ENCODE measurements at regions of chr11 and their contacts with region 1.

Region 1: DNA sequence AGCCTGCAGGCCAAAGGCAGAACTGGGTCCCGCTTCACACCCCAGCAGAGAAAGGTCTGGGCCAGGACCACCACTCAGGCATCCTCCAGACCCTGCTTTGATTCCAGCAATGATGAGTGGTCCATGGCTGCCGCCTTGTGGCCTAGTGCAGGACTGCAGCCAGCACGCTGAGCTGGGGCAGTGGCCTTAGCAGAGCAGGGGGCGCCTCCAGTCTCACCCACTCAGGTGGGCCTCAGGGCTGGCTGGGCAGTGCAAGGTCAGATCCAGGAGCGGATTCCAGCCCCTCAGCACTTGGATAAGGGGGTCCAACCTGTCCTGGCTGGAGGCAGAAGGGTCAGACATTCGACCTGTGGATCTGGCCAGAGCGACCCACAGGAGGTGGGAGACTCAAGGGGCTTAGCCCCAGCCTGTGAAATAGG is 9.6 kb upstream of the PDE2A start:
- DNase-seq: no peak
- H3K4me3 ChIP-seq: no peak overlapping the region
- H3K27ac ChIP-seq: no peak overlapping the region
- H3K27me3 ChIP-seq: peaks cover 8% of the 10 kb centered on the region
- CTCF ChIP-seq: peak; percentile 91

Region 2: DNA sequence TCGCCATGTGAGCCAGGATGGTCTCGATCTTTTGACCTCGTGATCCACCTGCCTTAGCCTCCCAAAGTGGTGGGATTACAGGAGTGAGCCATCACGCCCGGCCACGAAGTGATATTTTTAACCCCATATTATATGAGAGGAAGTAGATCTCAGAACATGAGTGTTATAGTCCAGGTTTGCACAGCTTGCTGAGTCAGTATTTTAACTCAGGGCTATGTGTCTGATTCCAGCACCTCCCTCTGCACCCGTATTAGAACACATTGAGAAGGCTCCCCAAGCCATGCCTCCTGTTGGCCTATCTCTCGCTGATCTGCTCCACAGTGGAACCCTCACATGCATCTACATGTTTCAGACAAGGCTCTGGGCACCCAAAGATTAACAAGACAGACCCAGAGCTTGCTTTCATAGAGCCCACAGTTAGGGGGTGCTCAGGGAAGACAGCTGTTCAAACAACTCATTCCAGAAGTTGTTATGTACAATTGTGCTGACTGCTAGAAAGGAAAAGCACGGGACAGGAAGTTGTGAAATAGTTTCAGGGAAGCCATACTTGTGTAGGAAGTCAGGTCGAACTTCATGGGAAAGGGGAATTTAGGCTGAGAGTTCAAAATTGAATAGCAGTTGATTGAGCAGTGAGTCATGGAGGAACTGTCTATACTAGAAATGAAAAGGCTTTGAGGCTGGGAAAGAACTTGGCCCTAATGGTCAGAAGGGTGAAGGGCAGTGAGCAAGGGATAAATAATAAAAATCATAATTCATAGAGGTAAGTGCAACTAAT is 200.2 kb before region 1 on chr11:
- CTCF ChIA-PET with region 1: interaction called, 17 read pairs
- POLR2A ChIA-PET with region 1: no interaction called
- DNase-seq: no peak
- H3K4me3 ChIP-seq: no peak overlapping the region
- H3K27ac ChIP-seq: no peak overlapping the region
- H3K27me3 ChIP-seq: peaks cover 25% of the 10 kb centered on the region
- CTCF ChIP-seq: no peak

Region 3: DNA sequence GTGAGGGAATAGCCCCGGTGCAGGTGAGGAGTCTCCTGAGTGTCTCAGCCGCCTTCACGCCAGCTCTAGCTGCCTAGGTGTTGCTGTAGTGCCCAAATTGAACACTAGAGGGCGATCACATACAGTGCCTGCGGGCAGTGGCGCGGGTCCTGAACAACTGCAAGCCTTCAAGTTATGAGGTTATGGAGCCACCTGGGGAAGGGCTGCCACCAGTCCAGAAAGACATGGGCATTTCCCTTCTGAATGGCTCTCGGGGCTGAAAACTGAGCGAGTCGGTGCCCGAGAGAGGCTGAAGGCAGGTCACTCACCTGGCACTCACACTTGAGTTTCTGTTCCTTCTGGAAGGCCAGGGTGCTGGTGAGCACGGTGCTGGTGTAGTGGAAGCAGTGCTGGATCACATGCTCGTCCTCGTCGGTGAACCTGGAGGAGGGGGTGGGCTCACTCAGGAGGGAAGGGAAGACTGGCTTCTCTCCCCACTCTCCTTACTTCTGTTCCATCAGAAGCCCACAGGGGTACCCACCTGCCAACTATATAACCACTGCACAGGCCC is 98.0 kb before region 1 on chr11:
- CTCF ChIA-PET with region 1: interaction called, 18 read pairs
- POLR2A ChIA-PET with region 1: no interaction called
- DNase-seq: peak; percentile 10
- H3K4me3 ChIP-seq: no peak overlapping the region
- H3K27ac ChIP-seq: no peak overlapping the region
- H3K27me3 ChIP-seq: peaks cover 74% of the 10 kb centered on the region
- CTCF ChIP-seq: peak; percentile 84

Region 4: GRCh38 chr11:72700026-72700610 is 16.3 kb after region 1 on chr11:
- CTCF ChIA-PET with region 1: interaction called, 10 read pairs
- POLR2A ChIA-PET with region 1: no interaction called
- DNase-seq: no peak
- H3K4me3 ChIP-seq: no peak overlapping the region
- H3K27ac ChIP-seq: no peak overlapping the region
- H3K27me3 ChIP-seq: no peaks in the 10 kb centered on the region
- CTCF ChIP-seq: no peak

Region 5: GRCh38 chr11:72724851-72725730 is 41.3 kb after region 1 on chr11:
- CTCF ChIA-PET with region 1: no interaction called
- POLR2A ChIA-PET with region 1: no interaction called
- DNase-seq: peak; percentile 65
- H3K4me3 ChIP-seq: no peak overlapping the region
- H3K27ac ChIP-seq: peak overlapping the region; percentile 11
- H3K27me3 ChIP-seq: no peaks in the 10 kb centered on the region
- CTCF ChIP-seq: peak; percentile 89

Measured in AG04450 (cell line).